ENCODE measurements at regions of chr10 and their contacts with region 1.

Region 1: GRCh38 chr10:63720072-63720537 is 198.9 kb downstream of the REEP3 start:
- DNase-seq: peak; percentile 62
- H3K4me3 ChIP-seq: no peak overlapping the region
- H3K27ac ChIP-seq: no peak overlapping the region
- H3K4me1 ChIP-seq: peaks cover 20% of the 10 kb centered on the region
- H3K27me3 ChIP-seq: no peaks in the 10 kb centered on the region
- CTCF ChIP-seq: peak; percentile 76 to 81
- POLR2A ChIP-seq: no peak

Region 2: GRCh38 chr10:63157845-63158624 is 562.1 kb before region 1 on chr10:
- CTCF ChIA-PET with region 1: interaction called, 30 read pairs
- POLR2A ChIA-PET with region 1: no interaction called
- dilution Hi-C with region 1: no loop called
- intact Hi-C with region 1: no loop called
- DNase-seq: peak; percentile 74
- H3K4me3 ChIP-seq: no peak overlapping the region
- H3K27ac ChIP-seq: no peak overlapping the region
- H3K4me1 ChIP-seq: no peaks in the 10 kb centered on the region
- H3K27me3 ChIP-seq: no peaks in the 10 kb centered on the region
- CTCF ChIP-seq: peak; percentile 65 to 71
- POLR2A ChIP-seq: no peak

Region 3: DNA sequence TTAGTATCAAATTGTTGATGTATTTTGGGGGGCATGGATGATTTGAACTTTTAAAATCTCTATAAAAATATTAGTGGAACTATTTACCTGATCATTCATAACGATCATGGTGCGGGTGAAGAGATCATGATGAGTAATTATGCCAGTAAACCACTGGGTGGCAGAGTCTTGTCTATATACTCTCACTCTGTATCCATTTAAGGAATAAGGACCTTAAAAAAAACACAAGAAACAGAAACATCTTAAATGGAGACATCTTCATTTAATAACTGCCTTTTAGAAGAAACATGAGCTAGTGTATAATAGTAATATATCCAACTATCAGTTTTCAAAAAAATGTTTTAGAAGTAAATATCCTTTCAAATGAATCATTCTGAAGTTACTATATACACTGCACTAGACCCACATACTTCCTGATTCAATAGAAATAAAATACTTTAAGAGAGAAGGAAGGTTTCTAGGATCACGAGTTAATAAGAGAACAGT is 502.9 kb before region 1 on chr10:
- CTCF ChIA-PET with region 1: interaction called, 64 read pairs
- POLR2A ChIA-PET with region 1: no interaction called
- dilution Hi-C with region 1: loop called (anchors 25 kb)
- intact Hi-C with region 1: loop called (anchors 1 kb)
- DNase-seq: peak; percentile 74
- H3K4me3 ChIP-seq: no peak overlapping the region
- H3K27ac ChIP-seq: peak overlapping the region; percentile 30
- H3K4me1 ChIP-seq: peaks cover 4% of the 10 kb centered on the region
- H3K27me3 ChIP-seq: no peaks in the 10 kb centered on the region
- CTCF ChIP-seq: peak; percentile 34 to 38
- POLR2A ChIP-seq: no peak

Region 4: GRCh38 chr10:63465293-63466143 is 254.6 kb before region 1 on chr10 and contains the start of gene JMJD1C:
- CTCF ChIA-PET with region 1: interaction called, 20 read pairs
- POLR2A ChIA-PET with region 1: no interaction called
- dilution Hi-C with region 1: no loop called
- intact Hi-C with region 1: loop called (anchors 2 kb)
- DNase-seq: peak; percentile 80
- H3K4me3 ChIP-seq: peak within 1 kb of the TSS; percentile 55 to 98 (median 83)
- H3K27ac ChIP-seq: peak within 1 kb of the TSS; percentile 82
- H3K4me1 ChIP-seq: peaks cover 5% of the 10 kb centered on the region
- H3K27me3 ChIP-seq: no peaks in the 10 kb centered on the region
- CTCF ChIP-seq: peak in 1 of 2 donors; percentile 12
- POLR2A ChIP-seq: peak; percentile 84
- total RNA-seq, gene JMJD1C: 93.3 and 97.1 TPM in 2 replicates

Region 5: DNA sequence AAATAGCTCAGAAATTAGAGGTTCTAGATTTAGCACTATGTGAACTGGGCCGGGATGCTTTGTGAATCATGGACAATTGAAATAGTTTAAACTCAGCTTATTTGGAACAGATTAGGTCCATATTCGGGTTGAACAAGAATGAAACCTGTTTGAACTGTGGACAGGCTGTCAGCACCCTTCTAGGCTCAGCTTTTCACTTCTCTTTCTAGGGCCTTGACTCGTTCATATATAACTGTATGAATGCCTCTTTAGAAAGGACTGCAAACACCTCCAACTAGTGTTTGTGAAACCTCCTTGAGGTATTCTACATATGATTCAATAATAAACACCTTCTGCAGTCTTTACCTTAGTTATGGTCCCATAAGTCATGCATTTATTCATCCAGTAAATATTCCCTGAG is 83.3 kb before region 1 on chr10:
- CTCF ChIA-PET with region 1: interaction called, 266 read pairs
- POLR2A ChIA-PET with region 1: no interaction called
- dilution Hi-C with region 1: no loop called
- intact Hi-C with region 1: no loop called
- DNase-seq: no peak
- H3K4me3 ChIP-seq: no peak overlapping the region
- H3K27ac ChIP-seq: no peak overlapping the region
- H3K4me1 ChIP-seq: no peaks in the 10 kb centered on the region
- H3K27me3 ChIP-seq: no peaks in the 10 kb centered on the region
- CTCF ChIP-seq: no peak
- POLR2A ChIP-seq: no peak

Region 6: DNA sequence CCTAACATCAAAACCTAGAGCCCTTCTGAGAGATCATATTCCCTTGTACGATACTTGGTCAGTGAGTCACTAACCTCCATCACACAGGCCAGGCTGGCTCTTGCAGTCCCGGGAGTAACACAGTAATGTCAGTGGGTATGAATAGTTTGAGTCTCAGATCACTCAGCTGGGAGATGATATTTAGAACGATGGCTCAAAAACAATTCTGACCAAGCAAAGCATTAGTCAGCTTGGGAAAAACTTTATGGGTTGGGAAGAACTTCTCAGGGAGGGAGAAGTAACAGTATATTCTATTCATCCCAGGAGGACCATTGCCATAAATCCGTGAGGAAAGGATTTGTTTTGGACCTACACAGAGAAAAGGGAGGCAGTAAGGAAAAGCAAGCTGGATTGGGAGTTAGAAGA is 19.9 kb before region 1 on chr10:
- CTCF ChIA-PET with region 1: interaction called, 11 read pairs
- POLR2A ChIA-PET with region 1: no interaction called
- dilution Hi-C with region 1: no loop called
- intact Hi-C with region 1: no loop called
- DNase-seq: peak; percentile 91
- H3K4me3 ChIP-seq: no peak overlapping the region
- H3K27ac ChIP-seq: peak overlapping the region; percentile 93
- H3K4me1 ChIP-seq: peaks cover 27% of the 10 kb centered on the region
- H3K27me3 ChIP-seq: no peaks in the 10 kb centered on the region
- CTCF ChIP-seq: no peak
- POLR2A ChIP-seq: no peak

Region 7: GRCh38 chr10:63767138-63767801 is 47.2 kb after region 1 on chr10:
- CTCF ChIA-PET with region 1: interaction called, 53 read pairs
- POLR2A ChIA-PET with region 1: no interaction called
- dilution Hi-C with region 1: no loop called
- intact Hi-C with region 1: loop called (anchors 1 kb)
- DNase-seq: peak; percentile 70
- H3K4me3 ChIP-seq: no peak overlapping the region
- H3K27ac ChIP-seq: no peak overlapping the region
- H3K4me1 ChIP-seq: no peaks in the 10 kb centered on the region
- H3K27me3 ChIP-seq: no peaks in the 10 kb centered on the region
- CTCF ChIP-seq: peak in 1 of 2 donors; percentile 33
- POLR2A ChIP-seq: no peak